Endothelial cell of umbilical vein (primary cell): ENCODE measurements at regions of chr18 and their contacts with region 1.

Region 1: DNA sequence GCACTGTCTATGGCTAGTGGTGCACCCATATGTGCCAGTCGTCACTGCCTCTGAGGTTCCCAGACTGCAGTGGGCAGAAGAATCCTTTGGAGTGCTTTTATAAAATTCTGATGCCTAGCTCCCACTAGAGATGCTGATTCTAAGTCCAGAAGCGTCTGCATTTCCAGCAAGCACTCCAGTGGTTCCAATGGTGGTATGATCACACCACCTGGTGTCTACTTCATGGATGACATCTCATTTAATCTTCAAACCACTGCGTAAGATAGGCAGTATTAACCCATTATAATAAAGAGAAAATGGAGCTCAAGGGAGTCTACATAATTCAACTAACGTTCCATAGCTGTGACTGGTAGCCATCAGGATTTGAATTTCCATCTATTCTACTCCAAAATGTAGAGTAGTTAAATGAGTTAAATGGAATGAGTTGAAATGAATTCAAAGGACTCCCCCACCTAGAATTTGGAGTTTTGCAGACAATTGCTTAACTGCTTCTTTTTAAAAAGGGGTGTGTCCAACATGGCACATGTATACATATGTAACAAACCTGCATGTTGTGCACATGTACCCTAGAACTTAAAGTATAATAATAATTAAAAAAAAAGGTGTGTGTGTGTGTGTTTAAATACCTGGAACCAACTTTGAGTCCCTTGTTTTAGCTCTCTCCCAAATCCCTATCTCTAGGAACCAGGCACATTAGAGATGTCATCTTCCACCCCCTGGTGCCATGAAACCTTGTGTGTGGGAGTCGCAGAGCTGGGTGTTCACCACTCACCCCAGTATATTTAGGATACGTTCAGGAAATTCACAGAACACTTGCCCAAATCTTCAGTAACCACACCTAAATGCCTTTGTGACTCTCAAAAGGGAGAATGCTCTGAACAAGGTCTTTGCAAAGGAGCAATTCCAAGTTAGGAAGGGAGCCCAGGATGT is 14.1 kb downstream of the LAMA3 start:
- DNase-seq: peak; percentile 80
- H3K4me3 ChIP-seq: no peak overlapping the region
- H3K27ac ChIP-seq: no peak overlapping the region
- H3K4me1 ChIP-seq: no peaks in the 10 kb centered on the region
- H3K27me3 ChIP-seq: no peaks in the 10 kb centered on the region
- CTCF ChIP-seq: peak; percentile 35 to 49
- POLR2A ChIP-seq: no peak

Region 2: GRCh38 chr18:23437357-23438045 is 265.8 kb before region 1 on chr18:
- CTCF ChIA-PET with region 1: no interaction called
- POLR2A ChIA-PET with region 1: no interaction called
- dilution Hi-C with region 1: no loop called
- intact Hi-C with region 1: no loop called
- DNase-seq: peak; percentile 71
- H3K4me3 ChIP-seq: peak overlapping the region; percentile 25 to 98 (median 76)
- H3K27ac ChIP-seq: peak overlapping the region; percentile 1
- H3K4me1 ChIP-seq: peaks cover 4% of the 10 kb centered on the region
- H3K27me3 ChIP-seq: no peaks in the 10 kb centered on the region
- CTCF ChIP-seq: no peak
- POLR2A ChIP-seq: peak; percentile 67

Region 3: GRCh38 chr18:23503038-23503962 is 200.0 kb before region 1 on chr18 and contains the start of gene RMC1:
- CTCF ChIA-PET with region 1: interaction called, 23 read pairs
- POLR2A ChIA-PET with region 1: no interaction called
- dilution Hi-C with region 1: no loop called
- intact Hi-C with region 1: no loop called
- DNase-seq: peak; percentile 92
- H3K4me3 ChIP-seq: peak within 1 kb of the TSS; percentile 54 to 86 (median 75)
- H3K27ac ChIP-seq: peak within 1 kb of the TSS; percentile 60
- H3K4me1 ChIP-seq: peaks cover 18% of the 10 kb centered on the region
- H3K27me3 ChIP-seq: no peaks in the 10 kb centered on the region
- CTCF ChIP-seq: peak in 1 of 2 donors; percentile 5
- POLR2A ChIP-seq: peak; percentile 88
- total RNA-seq, gene RMC1: 27.8 and 29.7 TPM in 2 replicates

Region 4: GRCh38 chr18:23578891-23579653 is 124.2 kb before region 1 on chr18:
- CTCF ChIA-PET with region 1: interaction called, 10 read pairs
- POLR2A ChIA-PET with region 1: no interaction called
- dilution Hi-C with region 1: no loop called
- intact Hi-C with region 1: no loop called
- DNase-seq: no peak
- H3K4me3 ChIP-seq: no peak overlapping the region
- H3K27ac ChIP-seq: no peak overlapping the region
- H3K4me1 ChIP-seq: peaks cover 11% of the 10 kb centered on the region
- H3K27me3 ChIP-seq: no peaks in the 10 kb centered on the region
- CTCF ChIP-seq: no peak
- POLR2A ChIP-seq: no peak

Region 5: GRCh38 chr18:23619388-23619881 is 83.9 kb before region 1 on chr18:
- CTCF ChIA-PET with region 1: interaction called, 260 read pairs
- POLR2A ChIA-PET with region 1: no interaction called
- dilution Hi-C with region 1: no loop called
- intact Hi-C with region 1: loop called (anchors 1 kb)
- DNase-seq: peak; percentile 20
- H3K4me3 ChIP-seq: peak overlapping the region in 2 of 3 experiments; percentile 37 to 48
- H3K27ac ChIP-seq: no peak overlapping the region
- H3K4me1 ChIP-seq: peaks cover 6% of the 10 kb centered on the region
- H3K27me3 ChIP-seq: peaks cover 4 to 11% of the 10 kb centered on the region in 2 experiments
- CTCF ChIP-seq: peak in 1 of 2 donors; percentile 10
- POLR2A ChIP-seq: no peak

Region 6: GRCh38 chr18:23650968-23651927 is 52.1 kb before region 1 on chr18:
- CTCF ChIA-PET with region 1: interaction called, 10 read pairs
- POLR2A ChIA-PET with region 1: no interaction called
- dilution Hi-C with region 1: no loop called
- intact Hi-C with region 1: no loop called
- DNase-seq: peak; percentile 51
- H3K4me3 ChIP-seq: no peak overlapping the region
- H3K27ac ChIP-seq: no peak overlapping the region
- H3K4me1 ChIP-seq: peaks cover 10% of the 10 kb centered on the region
- H3K27me3 ChIP-seq: peaks cover 0 to 4% of the 10 kb centered on the region in 2 experiments
- CTCF ChIP-seq: no peak
- POLR2A ChIP-seq: no peak

Region 7: DNA sequence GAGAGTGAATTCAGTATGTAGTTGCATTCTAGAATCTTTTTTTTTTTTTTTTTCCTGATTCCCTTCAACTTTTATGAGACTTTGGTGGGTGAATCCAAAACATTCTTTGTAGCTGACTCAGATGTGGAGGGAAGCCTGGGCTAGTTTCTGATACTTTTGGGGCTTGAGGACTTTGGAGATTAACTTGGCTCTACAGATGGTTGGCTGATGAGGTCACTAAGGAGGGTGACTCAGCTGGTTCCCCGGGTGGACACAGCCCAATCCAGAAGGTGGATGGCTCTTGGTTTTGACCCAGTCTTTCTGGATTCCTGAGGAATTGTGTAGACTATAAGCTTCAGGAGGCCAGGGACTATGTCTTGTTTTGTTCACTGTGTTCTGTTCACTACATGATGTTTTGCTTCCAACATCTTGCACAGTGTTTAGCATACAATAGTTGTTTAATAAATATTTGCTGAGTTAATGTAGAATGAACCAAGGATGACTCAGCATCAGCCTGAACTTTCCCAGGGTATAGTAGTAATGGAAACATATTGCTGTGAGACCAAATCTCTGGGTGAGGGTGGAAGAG is 16.4 kb after region 1 on chr18:
- CTCF ChIA-PET with region 1: interaction called, 21 read pairs
- POLR2A ChIA-PET with region 1: no interaction called
- dilution Hi-C with region 1: no loop called
- intact Hi-C with region 1: no loop called
- DNase-seq: peak; percentile 88
- H3K4me3 ChIP-seq: no peak overlapping the region
- H3K27ac ChIP-seq: peak overlapping the region; percentile 84
- H3K4me1 ChIP-seq: peaks cover 19% of the 10 kb centered on the region
- H3K27me3 ChIP-seq: no peaks in the 10 kb centered on the region
- CTCF ChIP-seq: no peak
- POLR2A ChIP-seq: no peak

Region 8: DNA sequence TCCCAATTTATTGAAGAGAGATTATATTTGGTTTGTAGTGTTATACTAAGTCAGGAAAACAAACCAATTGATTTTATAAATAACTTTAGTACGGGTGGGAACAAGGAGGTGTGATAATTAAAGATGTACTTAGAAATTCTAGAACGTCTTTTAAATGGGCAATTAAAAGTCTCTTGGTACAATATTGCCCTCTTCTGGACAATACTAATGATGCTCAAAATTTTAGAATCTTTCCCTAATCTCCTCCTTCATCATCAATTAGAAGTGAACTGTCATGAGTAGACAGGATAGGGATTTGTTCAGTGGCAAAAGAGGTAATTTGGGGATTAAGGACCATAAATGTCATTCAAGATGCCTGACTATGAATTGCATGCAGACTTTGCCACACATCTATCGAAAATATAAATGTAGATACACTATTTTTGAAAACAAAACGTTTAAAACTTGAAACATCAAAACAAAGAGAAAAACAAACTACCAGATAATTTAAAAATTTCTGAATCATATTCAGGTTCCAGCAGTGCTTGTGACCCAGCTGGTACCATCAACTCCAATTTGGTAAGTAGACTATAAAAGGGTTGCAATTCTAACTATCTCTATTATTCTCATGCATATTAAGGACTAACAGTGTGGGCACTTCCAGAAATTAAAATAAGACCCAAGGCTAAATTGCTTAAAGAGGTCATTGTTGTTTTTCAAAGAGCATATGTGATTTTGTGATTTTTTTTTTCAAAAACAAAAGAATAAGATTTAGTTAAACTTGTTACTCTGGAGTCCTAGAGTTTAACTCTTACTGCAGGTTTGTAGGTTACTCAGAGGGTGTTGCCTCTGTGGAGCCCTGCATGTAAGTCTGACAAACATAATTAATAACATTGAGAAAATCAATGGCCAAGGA is 109.5 kb after region 1 on chr18:
- CTCF ChIA-PET with region 1: interaction called, 48 read pairs
- POLR2A ChIA-PET with region 1: no interaction called
- dilution Hi-C with region 1: no loop called
- intact Hi-C with region 1: loop called (anchors 1 kb)
- DNase-seq: peak; percentile 58
- H3K4me3 ChIP-seq: no peak overlapping the region
- H3K27ac ChIP-seq: no peak overlapping the region
- H3K4me1 ChIP-seq: no peaks in the 10 kb centered on the region
- H3K27me3 ChIP-seq: no peaks in the 10 kb centered on the region
- CTCF ChIP-seq: peak; percentile 21 to 30
- POLR2A ChIP-seq: no peak